ENCODE measurements at regions of chr12 and their contacts with region 1.

Region 1: DNA sequence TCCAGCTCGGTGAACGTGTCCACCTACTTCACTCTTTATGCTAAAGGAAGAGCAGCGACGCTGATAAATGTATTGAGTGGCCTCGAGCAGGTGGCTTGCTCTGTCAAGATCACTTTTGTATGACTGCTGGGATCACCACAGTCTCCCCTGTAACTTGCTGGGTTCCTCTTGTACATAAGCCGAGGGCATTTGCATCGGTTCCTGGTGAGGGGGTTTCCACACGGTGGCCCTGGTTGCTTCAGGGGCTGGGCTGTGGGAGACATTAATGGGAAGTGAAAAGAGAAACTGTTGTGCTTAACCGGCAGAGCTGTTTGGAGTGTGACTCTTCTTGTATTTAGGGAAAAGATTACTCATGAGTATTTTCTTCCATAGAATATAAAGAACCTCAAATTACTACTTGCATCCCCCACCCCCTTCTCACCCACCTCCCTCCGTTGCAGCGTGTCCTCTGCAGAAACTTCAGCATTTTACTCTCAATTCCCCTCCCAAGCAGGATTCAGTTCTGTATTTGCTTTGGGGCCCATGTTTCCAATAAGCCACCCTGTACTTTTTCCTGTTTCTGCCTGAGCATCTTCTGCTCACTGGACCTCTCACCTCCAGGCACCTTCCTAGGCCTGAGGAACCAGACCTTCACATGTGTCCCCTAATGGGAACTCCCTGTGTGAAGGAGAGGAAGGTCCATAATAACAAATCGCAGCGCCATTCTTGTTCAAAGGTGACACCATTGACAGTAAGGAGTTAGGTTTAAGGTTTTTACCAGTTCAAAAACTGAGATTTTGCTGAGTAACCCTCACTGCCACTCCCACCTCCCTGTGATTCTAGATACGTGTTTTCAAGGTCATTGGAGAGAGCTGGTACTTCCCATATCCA is 187.0 kb downstream of the ETV6 start:
- DNase-seq: peak; percentile 93 to 98 (median 96)
- H3K4me3 ChIP-seq: peak overlapping the region in 1 of 3 experiments; percentile 46
- H3K4me3 Mint-ChIP-seq: peak overlapping the region; percentile 58 to 77
- H3K27ac ChIP-seq: peak overlapping the region; percentile 71 to 92
- H3K27ac Mint-ChIP-seq: peak overlapping the region; percentile 95 to 99 (median 98)
- H3K4me1 ChIP-seq: peaks cover 90 to 96% of the 10 kb centered on the region in 2 donors
- H3K4me1 Mint-ChIP-seq: peaks cover 93% of the 10 kb centered on the region
- H3K27me3 ChIP-seq: no peaks in the 10 kb centered on the region
- H3K27me3 Mint-ChIP-seq: no peaks in the 10 kb centered on the region
- CTCF ChIP-seq: no peak

Region 2: DNA sequence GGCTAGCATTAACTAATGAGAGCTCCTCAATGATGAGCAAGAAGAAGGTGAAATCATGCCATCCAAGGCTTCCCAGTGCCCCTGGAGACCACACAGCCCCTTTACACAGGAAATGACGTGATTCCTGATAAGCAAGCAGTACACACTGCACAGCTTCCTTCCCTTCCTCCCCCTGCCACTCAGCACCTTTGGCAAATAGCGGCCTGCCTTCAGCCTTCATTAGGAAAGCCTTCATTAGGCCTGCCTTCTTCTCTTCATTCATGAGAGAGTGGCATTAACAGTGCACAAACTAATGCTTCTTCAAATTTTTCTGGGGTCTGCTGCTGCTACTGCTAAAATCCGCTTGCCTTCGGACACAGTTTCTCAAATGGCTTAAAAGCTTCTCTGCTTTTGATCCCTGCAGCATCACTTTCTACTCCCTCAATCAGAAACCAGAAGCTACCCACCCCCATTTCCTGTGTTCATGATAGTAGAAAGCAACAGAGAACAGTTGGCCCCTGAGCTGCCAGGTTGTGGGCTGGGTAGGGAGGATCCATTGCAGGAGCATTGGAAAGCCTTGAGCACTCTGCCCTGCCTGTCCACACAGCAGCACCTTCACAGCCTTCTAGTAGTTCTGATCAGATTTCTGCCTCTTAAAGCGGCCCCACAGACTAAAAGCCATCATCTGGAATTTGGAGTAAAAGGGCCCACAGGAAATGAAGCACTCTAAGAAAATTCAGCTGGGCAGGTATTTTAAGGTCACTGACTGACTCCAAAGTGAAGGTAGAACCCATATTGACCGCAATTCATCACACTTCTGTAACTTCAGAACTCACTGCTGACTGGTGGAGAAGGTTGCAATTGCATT is 290.8 kb before region 1 on chr12:
- intact Hi-C with region 1: no loop called
- DNase-seq: peak in 1 of 3 donors; percentile 14
- H3K4me3 ChIP-seq: no peak overlapping the region
- H3K4me3 Mint-ChIP-seq: peak overlapping the region in 1 of 2 donors; percentile 19
- H3K27ac ChIP-seq: no peak overlapping the region
- H3K27ac Mint-ChIP-seq: peak overlapping the region in 2 of 7 donors; percentile 19 to 52
- H3K4me1 ChIP-seq: peaks cover 9 to 11% of the 10 kb centered on the region in 2 donors
- H3K4me1 Mint-ChIP-seq: peaks cover 14% of the 10 kb centered on the region
- H3K27me3 ChIP-seq: no peaks in the 10 kb centered on the region
- H3K27me3 Mint-ChIP-seq: peaks cover 0 to 3% (median 2%) of the 10 kb centered on the region in 3 donors
- CTCF ChIP-seq: no peak

Region 3: DNA sequence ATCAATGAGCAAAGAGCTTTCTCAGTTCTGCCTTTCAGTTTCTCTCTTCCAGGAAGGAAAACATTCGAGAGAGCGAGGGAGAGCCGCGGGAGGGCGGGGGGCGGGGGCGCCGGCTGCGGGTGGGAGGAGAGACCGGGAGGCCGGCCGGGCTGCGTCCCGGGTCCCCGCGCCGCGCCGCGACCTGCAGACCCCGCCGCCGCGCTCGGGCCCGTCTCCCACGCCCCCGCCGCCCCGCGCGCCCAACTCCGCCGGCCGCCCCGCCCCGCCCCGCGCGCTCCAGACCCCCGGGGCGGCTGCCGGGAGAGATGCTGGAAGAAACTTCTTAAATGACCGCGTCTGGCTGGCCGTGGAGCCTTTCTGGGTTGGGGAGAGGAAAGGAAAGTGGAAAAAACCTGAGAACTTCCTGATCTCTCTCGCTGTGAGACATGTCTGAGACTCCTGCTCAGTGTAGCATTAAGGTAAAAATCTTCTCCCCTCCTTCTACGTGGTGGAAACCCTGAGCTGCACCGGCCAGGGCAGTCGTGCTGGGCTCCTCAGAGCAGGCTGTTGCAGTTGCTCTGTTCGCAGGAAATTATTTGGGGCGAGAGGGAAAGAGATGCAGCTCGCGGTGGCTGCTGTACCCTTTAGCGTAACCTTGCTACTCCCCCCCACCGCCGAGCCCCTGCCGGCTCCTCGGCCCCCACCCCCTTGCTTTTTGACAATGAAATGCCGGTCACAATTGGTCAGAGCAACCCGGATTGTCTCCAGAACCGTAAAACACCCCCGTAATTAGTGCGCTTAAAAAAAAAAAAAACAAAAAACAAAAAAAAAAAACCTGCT is 186.6 kb before region 1 on chr12:
- intact Hi-C with region 1: loop called (anchors 5 to 10 kb)
- DNase-seq: peak in 2 of 3 donors; percentile 37 to 45
- H3K4me3 ChIP-seq: peak overlapping the region; percentile 96 to 100 (median 96)
- H3K4me3 Mint-ChIP-seq: peak overlapping the region; percentile 95 to 98
- H3K27ac ChIP-seq: peak overlapping the region; percentile 96 to 97
- H3K27ac Mint-ChIP-seq: peak overlapping the region; percentile 95 to 99 (median 98)
- H3K4me1 ChIP-seq: peaks cover 38 to 45% of the 10 kb centered on the region in 2 donors
- H3K4me1 Mint-ChIP-seq: peaks cover 32% of the 10 kb centered on the region
- H3K27me3 ChIP-seq: no peaks in the 10 kb centered on the region
- H3K27me3 Mint-ChIP-seq: peaks cover 0 to 1% (median 0%) of the 10 kb centered on the region in 3 donors
- CTCF ChIP-seq: no peak

Region 4: GRCh38 chr12:11758510-11759493 is 77.7 kb before region 1 on chr12:
- intact Hi-C with region 1: loop called in 1 of 2 experiments (anchors 10 kb)
- DNase-seq: peak; percentile 67 to 83 (median 76)
- H3K4me3 ChIP-seq: peak overlapping the region in 2 of 3 experiments; percentile 25 to 30
- H3K4me3 Mint-ChIP-seq: peak overlapping the region; percentile 50 to 57
- H3K27ac ChIP-seq: peak overlapping the region; percentile 81 to 90
- H3K27ac Mint-ChIP-seq: peak overlapping the region; percentile 91 to 98 (median 96)
- H3K4me1 ChIP-seq: peaks cover 57 to 81% of the 10 kb centered on the region in 2 donors
- H3K4me1 Mint-ChIP-seq: peaks cover 75% of the 10 kb centered on the region
- H3K27me3 ChIP-seq: no peaks in the 10 kb centered on the region
- H3K27me3 Mint-ChIP-seq: no peaks in the 10 kb centered on the region
- CTCF ChIP-seq: no peak

Region 5: GRCh38 chr12:11855983-11856374 is 19.5 kb after region 1 on chr12:
- intact Hi-C with region 1: loop called in 1 of 2 experiments (anchors 2 kb)
- DNase-seq: peak; percentile 50 to 71 (median 62)
- H3K4me3 ChIP-seq: peak overlapping the region in 2 of 3 experiments; percentile 17 to 64
- H3K4me3 Mint-ChIP-seq: peak overlapping the region; percentile 58 to 78
- H3K27ac ChIP-seq: peak overlapping the region; percentile 72 to 93
- H3K27ac Mint-ChIP-seq: peak overlapping the region; percentile 91 to 97 (median 95)
- H3K4me1 ChIP-seq: peaks cover 43 to 47% of the 10 kb centered on the region in 2 donors
- H3K4me1 Mint-ChIP-seq: peaks cover 47% of the 10 kb centered on the region
- H3K27me3 ChIP-seq: no peaks in the 10 kb centered on the region
- H3K27me3 Mint-ChIP-seq: no peaks in the 10 kb centered on the region
- CTCF ChIP-seq: no peak

Region 6: GRCh38 chr12:12010277-12011039 is 173.9 kb after region 1 on chr12:
- intact Hi-C with region 1: loop called in 1 of 2 experiments (anchors 10 kb)
- DNase-seq: peak; percentile 90 to 95 (median 91)
- H3K4me3 ChIP-seq: peak overlapping the region; percentile 37 to 69 (median 42)
- H3K4me3 Mint-ChIP-seq: peak overlapping the region; percentile 78 to 83
- H3K27ac ChIP-seq: peak overlapping the region; percentile 81 to 97
- H3K27ac Mint-ChIP-seq: peak overlapping the region; percentile 96 to 98 (median 97)
- H3K4me1 ChIP-seq: peaks cover 47 to 50% of the 10 kb centered on the region in 2 donors
- H3K4me1 Mint-ChIP-seq: peaks cover 63% of the 10 kb centered on the region
- H3K27me3 ChIP-seq: no peaks in the 10 kb centered on the region
- H3K27me3 Mint-ChIP-seq: peaks cover 0 to 3% (median 0%) of the 10 kb centered on the region in 3 donors
- CTCF ChIP-seq: no peak